PC-3 (cell line): ENCODE measurements at regions of chr1 and their contacts with region 1.

Region 1: GRCh38 chr1:17632541-17633193 is 93.2 kb downstream of the ARHGEF10L start:
- DNase-seq: peak; percentile 82
- ATAC-seq: peak; percentile 88
- H3K4me3 ChIP-seq: no peak overlapping the region
- H3K27ac ChIP-seq: peak overlapping the region; percentile 55
- H3K4me1 ChIP-seq: peaks cover 13% of the 10 kb centered on the region
- H3K27me3 ChIP-seq: no peaks in the 10 kb centered on the region
- CTCF ChIP-seq: no peak

Region 2: DNA sequence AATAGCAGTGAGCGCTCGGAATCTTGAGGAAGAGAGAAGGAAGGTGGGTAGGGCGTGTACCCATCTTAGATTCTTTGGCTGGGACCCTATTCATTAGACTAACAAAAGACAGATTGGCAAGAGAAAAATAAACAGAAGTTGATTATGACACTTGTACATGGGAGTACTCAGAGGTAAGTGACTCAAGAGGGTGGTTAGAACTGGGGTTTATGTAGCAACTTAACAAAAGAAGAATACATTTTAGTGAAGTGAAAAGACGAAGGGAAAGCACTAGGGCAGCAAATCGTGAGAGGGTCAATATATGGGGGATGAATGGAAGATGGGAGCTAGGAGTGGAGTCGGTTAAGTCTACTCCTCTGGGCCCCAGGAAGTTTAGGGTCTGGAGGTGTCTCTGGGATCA is 167.4 kb before region 1 on chr1:
- CTCF ChIA-PET with region 1: no interaction called
- POLR2A ChIA-PET with region 1: no interaction called
- intact Hi-C with region 1: no loop called
- DNase-seq: peak; percentile 13
- ATAC-seq: no peak
- H3K4me3 ChIP-seq: no peak overlapping the region
- H3K27ac ChIP-seq: no peak overlapping the region
- H3K4me1 ChIP-seq: peaks cover 5% of the 10 kb centered on the region
- H3K27me3 ChIP-seq: no peaks in the 10 kb centered on the region
- CTCF ChIP-seq: no peak

Region 3: DNA sequence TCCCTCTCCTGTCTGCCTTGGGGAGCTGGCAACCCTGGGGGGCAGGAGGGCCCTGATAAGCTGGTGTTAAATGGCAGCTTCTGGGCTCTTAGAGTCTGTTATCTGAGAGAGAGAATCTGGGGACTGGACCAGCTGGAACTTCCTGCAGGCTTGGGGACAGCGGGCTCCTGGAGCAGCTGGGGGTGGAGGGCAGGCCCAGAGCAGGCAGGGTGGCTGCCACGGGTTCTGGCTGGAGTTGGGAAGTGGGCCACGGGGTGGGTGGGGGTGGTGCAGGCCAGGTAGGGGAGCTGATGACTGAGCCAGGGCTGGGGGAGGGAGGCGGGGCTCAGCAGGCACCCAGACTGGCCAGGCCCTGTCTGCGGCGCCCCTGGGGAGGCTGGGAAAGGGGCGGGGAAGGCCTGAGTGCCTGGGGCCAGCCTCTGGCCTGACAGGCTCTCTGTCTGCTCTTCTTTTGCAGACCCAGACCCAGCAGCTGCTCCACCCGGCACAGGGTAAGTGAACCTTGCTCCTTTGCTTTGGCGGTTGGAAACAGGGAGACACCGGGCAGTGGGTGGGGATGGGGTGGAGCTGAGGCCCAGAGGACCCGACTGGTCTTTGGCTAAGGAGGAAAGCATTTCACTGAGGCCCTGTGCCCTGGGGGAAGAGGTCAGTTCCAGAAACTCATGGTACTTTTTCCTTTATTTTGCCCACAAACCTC is 44.5 kb before region 1 on chr1:
- CTCF ChIA-PET with region 1: interaction called, 10 read pairs
- POLR2A ChIA-PET with region 1: no interaction called
- intact Hi-C with region 1: no loop called
- DNase-seq: no peak
- ATAC-seq: no peak
- H3K4me3 ChIP-seq: no peak overlapping the region
- H3K27ac ChIP-seq: no peak overlapping the region
- H3K4me1 ChIP-seq: peaks cover 9% of the 10 kb centered on the region; the same call in 1 of the 2 replicates
- H3K27me3 ChIP-seq: no peaks in the 10 kb centered on the region
- CTCF ChIP-seq: no peak

Region 4: DNA sequence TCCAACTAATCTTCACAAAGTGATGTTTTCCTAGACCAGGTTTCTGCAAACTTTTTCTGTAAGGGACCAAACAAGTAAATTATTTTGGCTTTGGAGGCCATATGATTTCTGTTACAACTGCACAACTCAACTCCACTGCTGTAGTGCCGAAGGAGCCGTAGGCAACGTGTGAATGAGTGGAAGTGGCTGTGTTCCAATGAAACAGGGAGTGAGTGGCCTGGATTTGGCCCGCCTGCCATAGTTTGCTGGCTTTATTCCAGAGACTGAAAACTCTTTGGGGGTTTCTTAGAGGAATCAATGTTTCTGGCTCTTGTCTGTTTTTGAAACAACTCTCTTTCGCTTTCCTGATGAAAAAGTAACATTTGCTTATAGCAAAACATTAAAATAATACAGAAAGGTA is 109.9 kb after region 1 on chr1:
- CTCF ChIA-PET with region 1: no interaction called
- POLR2A ChIA-PET with region 1: no interaction called
- intact Hi-C with region 1: no loop called
- DNase-seq: no peak
- ATAC-seq: no peak
- H3K4me3 ChIP-seq: no peak overlapping the region
- H3K27ac ChIP-seq: no peak overlapping the region
- H3K4me1 ChIP-seq: no peaks in the 10 kb centered on the region
- H3K27me3 ChIP-seq: peaks cover 23% of the 10 kb centered on the region; the same call in 1 of the 2 replicates
- CTCF ChIP-seq: no peak